GM10248 (cell line): ENCODE measurements at regions of chr17 and their contacts with region 1.

Region 1: GRCh38 chr17:40564883-40565768 is at the start of gene CCR7:
- DNase-seq: peak; percentile 65
- CTCF ChIP-seq: no peak

Region 2: GRCh38 chr17:40582328-40582901 is 17.3 kb after region 1 on chr17:
- CTCF ChIA-PET with region 1: interaction called, 47 read pairs
- POLR2A ChIA-PET with region 1: interaction called, 8 read pairs
- DNase-seq: peak; percentile 64
- CTCF ChIP-seq: no peak